ENCODE measurements at regions of chr5 and their contacts with region 1.

Region 1: GRCh38 chr5:101244621-101245020 is 341.5 kb upstream of the ST8SIA4 start:
- DNase-seq: no peak
- ATAC-seq: no peak
- H3K4me3 ChIP-seq: no peak overlapping the region
- H3K27ac ChIP-seq: no peak overlapping the region
- H3K4me1 ChIP-seq: no peaks in the 10 kb centered on the region
- H3K27me3 ChIP-seq: no peaks in the 10 kb centered on the region
- CTCF ChIP-seq: no peak
- EP300 ChIP-seq: no peak
- POLR2A ChIP-seq: no peak
- RAD21 ChIP-seq: no peak

Region 2: GRCh38 chr5:101153526-101153925 is 91.1 kb before region 1 on chr5:
- CTCF ChIA-PET with region 1: no interaction called
- POLR2A ChIA-PET with region 1: no interaction called
- RAD21 ChIA-PET with region 1: no interaction called
- SMC1A ChIA-PET with region 1: no interaction called
- in situ Hi-C with region 1: no loop called
- intact Hi-C with region 1: no loop called
- DNase-seq: no peak
- ATAC-seq: peak; percentile 34; the same call in 2 of the 3 replicates
- H3K4me3 ChIP-seq: no peak overlapping the region
- H3K27ac ChIP-seq: no peak overlapping the region
- H3K4me1 ChIP-seq: no peaks in the 10 kb centered on the region
- H3K27me3 ChIP-seq: no peaks in the 10 kb centered on the region
- CTCF ChIP-seq: no peak
- EP300 ChIP-seq: no peak
- POLR2A ChIP-seq: no peak
- RAD21 ChIP-seq: no peak

Region 3: DNA sequence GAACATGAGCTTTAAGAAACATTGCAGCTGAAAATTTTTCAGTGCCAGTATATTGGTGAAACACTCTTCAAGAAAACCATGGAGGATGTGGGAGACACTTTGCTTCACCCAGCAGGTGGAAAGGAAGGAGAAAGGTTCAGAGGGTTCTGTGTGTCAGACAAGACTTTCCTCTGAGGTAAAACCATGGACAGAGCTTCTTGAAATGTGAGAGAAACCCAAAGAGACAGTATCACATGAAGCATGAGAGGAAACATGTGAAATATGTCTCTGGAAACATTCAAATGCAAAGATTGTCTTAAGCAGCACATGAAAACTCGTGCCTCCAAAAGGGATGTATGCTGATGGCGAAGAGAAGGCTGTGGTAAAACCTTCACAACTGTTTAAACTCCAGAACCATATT is 27.3 kb after region 1 on chr5:
- CTCF ChIA-PET with region 1: no interaction called
- POLR2A ChIA-PET with region 1: no interaction called
- RAD21 ChIA-PET with region 1: no interaction called
- SMC1A ChIA-PET with region 1: no interaction called
- in situ Hi-C with region 1: no loop called
- intact Hi-C with region 1: loop called (anchors 1 kb)
- DNase-seq: no peak
- ATAC-seq: no peak
- H3K4me3 ChIP-seq: no peak overlapping the region
- H3K27ac ChIP-seq: no peak overlapping the region
- H3K4me1 ChIP-seq: no peaks in the 10 kb centered on the region
- H3K27me3 ChIP-seq: no peaks in the 10 kb centered on the region
- CTCF ChIP-seq: no peak
- EP300 ChIP-seq: no peak
- POLR2A ChIP-seq: no peak
- RAD21 ChIP-seq: no peak

Measured in GM12878 (cell line).